ENCODE measurements at regions of chr10 and their contacts with region 1.

Region 1: DNA sequence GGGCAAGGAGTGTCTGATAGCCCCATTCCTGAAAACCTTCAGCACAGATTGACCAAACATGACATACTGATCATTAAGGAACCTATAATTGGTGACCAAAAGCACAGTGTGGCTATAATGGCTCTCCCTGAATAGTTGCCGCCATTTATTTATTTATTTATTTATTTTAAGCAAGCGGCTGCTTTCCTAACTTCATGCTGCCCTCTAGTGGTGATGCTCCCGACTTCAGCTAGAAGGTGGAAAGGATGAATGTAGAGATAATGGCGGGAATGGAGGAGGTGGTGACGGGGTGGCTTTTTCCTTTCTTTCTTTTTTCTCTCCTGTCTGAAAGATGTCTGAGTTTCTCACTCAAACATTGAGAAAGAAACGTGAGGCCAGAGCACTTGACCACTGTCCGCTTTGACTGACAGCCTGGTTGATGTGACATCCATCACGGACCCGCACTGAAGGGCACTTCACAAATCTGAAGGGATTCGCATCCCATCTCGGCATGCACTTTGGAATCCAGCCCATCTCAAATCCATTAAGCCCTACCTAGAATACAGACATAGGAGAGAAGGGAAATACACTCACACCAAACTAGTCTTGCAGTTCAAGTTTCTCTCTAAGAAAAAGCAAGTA is 1090.1 kb downstream of the KCNMA1 start:
- DNase-seq: peak; percentile 84
- ATAC-seq: peak; percentile 65 to 71

Region 2: GRCh38 chr10:76036111-76036940 is 511.1 kb before region 1 on chr10:
- intact Hi-C with region 1: loop called in 1 of 2 experiments (anchors 5 kb)
- DNase-seq: peak; percentile 71
- ATAC-seq: peak; percentile 87 to 88

Region 3: DNA sequence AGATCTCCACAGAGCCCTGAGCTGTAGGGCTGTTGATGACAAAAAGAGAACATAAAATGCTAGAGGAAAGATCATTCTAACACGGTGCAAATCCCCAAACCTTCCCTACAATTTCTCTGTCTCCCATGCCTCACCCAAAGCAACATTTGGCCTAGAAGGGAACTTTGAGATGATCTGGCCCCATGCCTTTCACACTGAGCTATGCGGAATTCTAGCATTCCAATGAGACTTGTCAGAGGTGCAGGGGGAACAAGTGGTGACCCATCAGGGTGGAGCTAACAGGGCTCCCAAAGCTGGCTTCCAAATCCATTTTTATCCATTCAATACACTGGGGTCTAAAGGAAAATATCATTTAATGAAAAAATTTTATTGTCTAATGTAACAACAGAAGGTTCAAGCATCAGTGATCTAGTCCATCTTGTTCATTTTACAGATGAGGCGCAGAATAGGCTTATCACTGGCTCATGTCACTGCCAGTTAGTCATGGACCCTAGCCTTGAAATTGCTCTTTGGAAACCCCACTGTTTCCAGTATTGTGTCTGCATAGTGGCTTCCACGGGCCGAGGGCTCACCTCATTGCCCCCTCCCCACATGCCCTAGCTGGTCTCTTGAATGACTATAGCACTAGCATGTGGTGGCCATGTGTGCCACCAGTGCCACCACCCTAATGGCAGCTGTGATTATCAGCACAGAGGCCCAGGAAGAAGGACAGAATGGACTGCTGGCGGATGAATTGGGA is 115.0 kb before region 1 on chr10:
- intact Hi-C with region 1: loop called in 1 of 2 experiments (anchors 10 kb)
- DNase-seq: peak; percentile 48
- ATAC-seq: peak; percentile 64 to 83

Region 4: GRCh38 chr10:76463111-76463510 is 84.4 kb before region 1 on chr10:
- intact Hi-C with region 1: no loop called
- DNase-seq: no peak
- ATAC-seq: no peak

Region 5: DNA sequence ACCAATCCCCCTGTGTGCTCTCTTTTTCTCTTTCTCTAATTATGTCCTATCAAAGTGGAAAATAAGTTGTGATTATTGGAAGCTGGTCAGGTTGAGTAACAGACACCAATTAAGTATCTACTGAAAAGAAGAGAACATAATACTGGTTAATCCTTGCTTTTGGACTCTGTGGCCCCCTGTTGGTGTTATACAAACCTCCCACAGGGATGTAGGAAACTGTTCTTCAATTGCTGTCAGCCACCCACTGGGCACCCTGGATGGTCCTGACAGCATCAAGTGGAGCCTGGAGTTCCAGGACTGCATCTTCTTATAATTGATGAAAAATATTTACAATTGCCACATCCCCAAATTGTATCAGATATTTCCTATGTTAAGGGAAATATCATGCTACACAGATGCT is 150.5 kb after region 1 on chr10:
- intact Hi-C with region 1: no loop called
- DNase-seq: no peak
- ATAC-seq: no peak

Region 6: DNA sequence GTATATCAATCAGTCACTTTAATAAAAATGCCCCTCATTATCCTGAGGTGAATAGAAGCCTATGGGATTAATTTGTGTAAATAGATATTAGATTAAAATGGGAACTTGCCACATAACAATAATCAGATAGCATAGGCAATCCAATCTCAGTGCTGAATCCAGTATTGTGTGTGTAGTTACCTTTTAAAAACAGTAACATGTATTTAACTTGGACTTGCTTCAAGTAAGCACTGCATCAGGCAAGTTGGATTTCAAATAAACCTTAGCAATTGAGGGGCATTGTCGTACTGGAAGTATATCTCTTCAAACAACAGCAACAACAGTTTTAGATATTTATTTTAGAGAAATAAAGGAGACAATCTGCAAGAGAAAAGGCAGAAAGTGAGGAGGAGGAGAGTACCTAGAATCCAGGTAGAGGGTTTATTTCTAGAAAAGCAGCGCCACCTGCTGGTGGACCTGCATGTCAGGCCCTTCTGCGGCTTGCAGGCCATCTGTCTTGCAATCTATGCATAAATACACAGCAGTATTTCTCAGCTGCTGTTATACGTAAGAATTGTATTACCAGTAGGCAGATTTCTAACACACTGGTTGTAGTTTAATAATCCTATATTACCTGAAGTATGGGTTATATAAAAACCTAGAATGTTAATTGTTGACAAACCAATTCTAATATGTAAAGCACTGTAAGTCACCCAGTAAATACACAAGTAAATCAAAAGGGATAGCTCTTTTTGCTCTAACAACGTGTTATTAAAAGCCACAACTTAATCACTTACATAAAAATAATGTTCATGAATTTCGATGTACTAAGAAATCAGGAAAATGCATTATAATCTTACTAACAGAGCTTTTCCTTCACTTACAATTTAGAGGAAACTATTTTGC is 437.3 kb after region 1 on chr10:
- intact Hi-C with region 1: loop called in 1 of 2 experiments (anchors 5 kb)
- DNase-seq: peak; percentile 64
- ATAC-seq: peak; percentile 77 to 84

Measured in left cardiac atrium (tissue), 4 donors.